Caco-2 (cell line): ENCODE measurements at regions of chr9 and their contacts with region 1.

Region 1: GRCh38 chr9:136694236-136694942 is 7.1 kb upstream of the AGPAT2 start:
- DNase-seq: peak; percentile 79 to 83
- H3K4me3 ChIP-seq: no peak overlapping the region
- H3K4me3 Mint-ChIP-seq: no peak overlapping the region
- H3K27ac Mint-ChIP-seq: peak overlapping the region; percentile 91
- H3K4me1 ChIP-seq: peaks cover 73% of the 10 kb centered on the region
- H3K4me1 Mint-ChIP-seq: peaks cover 31% of the 10 kb centered on the region
- H3K27me3 ChIP-seq: no peaks in the 10 kb centered on the region
- H3K27me3 Mint-ChIP-seq: no peaks in the 10 kb centered on the region
- CTCF ChIP-seq: peak; percentile 86 to 89

Region 2: GRCh38 chr9:136482793-136483588 is 211.4 kb before region 1 on chr9 and contains the start of gene SEC16A:
- CTCF ChIA-PET with region 1: interaction called, 7 read pairs
- POLR2A ChIA-PET with region 1: interaction called, 4 read pairs
- intact Hi-C with region 1: loop called (anchors 1 kb)
- DNase-seq: peak; percentile 99
- H3K4me3 ChIP-seq: peak within 1 kb of the TSS; percentile 85
- H3K4me3 Mint-ChIP-seq: peak within 1 kb of the TSS; percentile 98
- H3K27ac Mint-ChIP-seq: peak within 1 kb of the TSS; percentile 100
- H3K4me1 ChIP-seq: peaks cover 16% of the 10 kb centered on the region
- H3K4me1 Mint-ChIP-seq: peaks cover 6% of the 10 kb centered on the region
- H3K27me3 ChIP-seq: no peaks in the 10 kb centered on the region
- H3K27me3 Mint-ChIP-seq: no peaks in the 10 kb centered on the region
- CTCF ChIP-seq: no peak
- total RNA-seq, gene SEC16A: 76.4 and 81.3 TPM in 2 replicates

Region 3: DNA sequence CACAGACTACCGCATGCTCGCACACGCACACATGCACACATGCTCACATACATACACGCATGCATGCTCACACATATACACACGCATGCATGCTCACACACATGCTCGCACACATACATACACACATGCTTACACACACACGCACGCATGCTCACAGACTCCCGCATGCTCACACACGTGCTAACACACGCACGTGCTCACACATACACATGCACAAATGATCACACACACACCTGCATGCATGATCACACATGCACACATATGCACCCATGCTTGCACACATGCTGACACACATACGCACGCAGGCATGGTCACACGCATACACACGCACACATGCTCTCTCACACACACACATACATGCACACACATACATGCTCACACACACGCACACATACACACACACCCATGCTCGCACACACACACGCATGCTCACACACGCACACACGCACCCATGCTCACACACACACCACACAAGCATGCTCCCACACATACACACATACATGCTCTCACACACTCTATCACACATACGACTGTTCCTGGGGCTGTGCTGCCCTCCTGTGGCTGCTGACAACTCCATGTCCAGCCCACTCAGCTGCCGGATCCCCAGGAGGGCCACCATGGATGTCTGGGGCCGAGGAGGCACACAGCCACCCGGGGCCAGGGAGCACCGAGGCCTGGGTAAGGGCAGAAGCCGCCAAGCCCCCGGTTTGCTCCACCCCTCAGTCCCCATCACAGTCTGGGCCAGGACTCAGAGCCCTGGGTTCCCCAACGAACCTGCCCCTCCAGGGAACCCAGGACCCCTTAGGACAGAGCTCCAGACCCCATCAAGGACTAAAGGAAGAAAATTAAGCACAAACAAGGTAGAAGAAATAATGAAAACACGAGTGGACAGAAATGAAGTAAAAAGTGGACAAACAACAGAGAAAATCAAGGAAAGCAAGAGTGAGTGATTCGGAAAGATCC is 63.1 kb before region 1 on chr9:
- CTCF ChIA-PET with region 1: interaction called, 9 read pairs
- POLR2A ChIA-PET with region 1: no interaction called
- intact Hi-C with region 1: loop called (anchors 5 kb)
- DNase-seq: peak; percentile 81 to 85
- H3K4me3 ChIP-seq: no peak overlapping the region
- H3K4me3 Mint-ChIP-seq: no peak overlapping the region
- H3K27ac Mint-ChIP-seq: no peak overlapping the region
- H3K4me1 ChIP-seq: peaks cover 16% of the 10 kb centered on the region
- H3K4me1 Mint-ChIP-seq: peaks cover 5% of the 10 kb centered on the region
- H3K27me3 ChIP-seq: no peaks in the 10 kb centered on the region
- H3K27me3 Mint-ChIP-seq: peaks cover 14% of the 10 kb centered on the region
- CTCF ChIP-seq: peak; percentile 79 to 84

Region 4: DNA sequence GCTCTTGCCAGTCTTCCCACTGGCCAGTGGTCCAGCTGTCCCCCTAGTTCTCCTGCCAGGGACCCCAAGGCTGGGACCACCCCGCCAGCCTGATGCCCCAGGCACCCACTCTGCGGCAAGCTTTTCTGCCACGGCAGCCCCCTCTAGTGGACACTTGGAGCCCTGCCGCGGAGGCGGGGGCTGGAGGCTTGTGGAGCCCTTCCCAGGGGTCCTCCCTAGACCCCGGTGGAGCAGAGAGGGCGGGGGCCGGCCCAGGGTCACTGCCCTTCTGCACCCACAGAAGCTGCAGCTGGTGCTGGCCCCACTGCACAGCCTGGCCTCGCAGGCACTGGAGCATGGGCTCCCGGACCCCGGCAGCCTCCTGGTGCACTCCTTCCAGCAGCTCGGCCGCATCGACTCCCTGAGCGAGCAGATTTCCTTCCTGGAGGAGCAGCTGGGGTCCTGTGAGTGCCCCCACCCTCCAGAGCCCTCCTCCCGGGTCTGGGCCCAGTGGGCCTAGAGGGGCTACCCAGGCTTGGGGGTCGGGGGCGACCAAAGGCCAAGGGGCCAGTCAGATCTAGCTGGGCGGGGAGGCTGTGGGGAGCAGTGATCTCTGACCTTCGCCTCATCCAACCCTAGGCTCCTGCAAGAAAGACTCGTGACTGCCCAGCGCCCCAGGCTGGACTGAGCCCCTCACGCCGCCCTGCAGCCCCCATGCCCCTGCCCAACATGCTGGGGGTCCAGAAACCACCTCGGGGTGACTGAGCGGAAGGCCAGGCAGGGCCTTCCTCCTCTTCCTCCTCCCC is 22.6 kb before region 1 on chr9:
- CTCF ChIA-PET with region 1: interaction called, 10 read pairs
- POLR2A ChIA-PET with region 1: interaction called, 3 read pairs
- intact Hi-C with region 1: no loop called
- DNase-seq: peak in 1 of 2 experiments; percentile 64
- H3K4me3 ChIP-seq: no peak overlapping the region
- H3K4me3 Mint-ChIP-seq: no peak overlapping the region
- H3K27ac Mint-ChIP-seq: no peak overlapping the region
- H3K4me1 ChIP-seq: peaks cover 19% of the 10 kb centered on the region
- H3K4me1 Mint-ChIP-seq: no peaks in the 10 kb centered on the region
- H3K27me3 ChIP-seq: no peaks in the 10 kb centered on the region
- H3K27me3 Mint-ChIP-seq: no peaks in the 10 kb centered on the region
- CTCF ChIP-seq: peak; percentile 76 to 83

Region 5: GRCh38 chr9:136728080-136728547 is 33.7 kb after region 1 on chr9:
- CTCF ChIA-PET with region 1: interaction called, 12 read pairs
- POLR2A ChIA-PET with region 1: interaction called, 4 read pairs
- intact Hi-C with region 1: loop called (anchors 1 kb)
- DNase-seq: peak; percentile 88 to 95
- H3K4me3 ChIP-seq: peak overlapping the region; percentile 99
- H3K4me3 Mint-ChIP-seq: peak overlapping the region; percentile 97
- H3K27ac Mint-ChIP-seq: peak overlapping the region; percentile 100
- H3K4me1 ChIP-seq: peaks cover 17% of the 10 kb centered on the region
- H3K4me1 Mint-ChIP-seq: peaks cover 10% of the 10 kb centered on the region
- H3K27me3 ChIP-seq: no peaks in the 10 kb centered on the region
- H3K27me3 Mint-ChIP-seq: no peaks in the 10 kb centered on the region
- CTCF ChIP-seq: peak; percentile 83 to 89